Left colon (tissue), 2 donors: ENCODE measurements at regions of chr5 and their contacts with region 1.

Region 1: DNA sequence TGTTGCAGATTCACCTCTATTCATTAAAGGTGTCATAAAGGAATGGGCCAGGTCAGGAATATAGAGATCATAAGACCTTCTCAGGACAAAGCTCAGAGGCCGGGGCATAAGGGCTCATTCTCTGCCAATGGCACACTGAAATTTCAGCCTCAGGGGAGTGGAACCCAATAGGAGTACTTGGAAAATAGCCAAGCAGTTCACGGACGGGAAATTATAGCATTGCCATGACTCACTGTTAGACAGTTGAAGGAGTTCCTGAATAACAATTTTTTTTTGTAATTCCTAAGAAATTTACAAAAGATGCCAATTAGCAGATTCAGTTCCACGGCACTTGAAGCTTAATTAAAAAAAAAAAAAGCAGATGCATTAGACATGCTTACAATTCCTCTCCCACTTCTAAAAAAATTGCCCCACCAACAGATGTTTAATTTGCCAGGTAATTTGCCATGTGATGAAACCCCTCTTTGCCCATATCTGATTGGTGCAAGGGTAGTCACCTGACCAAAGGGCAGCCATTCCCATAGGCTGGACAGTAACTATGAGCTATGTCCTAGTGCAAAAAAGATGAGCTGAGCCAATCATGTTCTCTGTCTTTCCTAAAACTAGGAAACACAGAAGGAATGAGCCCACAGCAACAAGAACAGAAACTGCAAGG is 58.6 kb downstream of the PTCD2 start:
- DNase-seq: no peak
- ATAC-seq: no peak

Region 2: GRCh38 chr5:72494623-72495124 is 115.9 kb after region 1 on chr5:
- intact Hi-C with region 1: no loop called
- DNase-seq: no peak
- ATAC-seq: no peak

Region 3: DNA sequence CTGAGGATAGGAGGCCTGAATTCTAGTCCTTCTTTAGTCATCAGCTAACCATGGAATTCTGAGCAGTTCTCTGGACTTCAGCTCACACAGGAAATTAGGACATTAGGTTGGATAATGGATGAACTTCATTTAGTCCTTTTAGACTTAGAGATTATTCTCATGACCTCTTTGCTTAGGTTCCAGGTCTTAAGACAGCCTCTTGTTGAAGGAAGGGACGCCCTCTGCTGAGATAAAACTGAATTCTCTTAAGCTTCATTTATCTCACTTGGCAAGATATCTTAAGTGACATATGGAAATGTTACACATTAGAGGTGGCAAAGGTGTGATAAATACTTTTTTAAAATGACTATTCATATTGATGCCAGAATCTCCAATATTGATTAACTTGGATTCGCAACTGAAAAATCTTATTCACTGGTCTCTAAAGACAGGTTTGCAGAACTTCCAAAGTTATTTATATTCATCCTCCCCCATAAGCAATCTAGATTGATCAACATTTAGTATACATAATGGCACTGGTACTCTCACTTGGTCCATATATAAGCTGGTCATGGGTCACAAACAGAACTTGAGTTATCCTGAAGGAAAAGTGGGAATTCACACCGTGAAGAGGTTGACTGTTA is 145.3 kb after region 1 on chr5:
- intact Hi-C with region 1: loop called in 1 of 2 experiments (anchors 10 kb)
- DNase-seq: no peak
- ATAC-seq: peak; percentile 88

Region 4: DNA sequence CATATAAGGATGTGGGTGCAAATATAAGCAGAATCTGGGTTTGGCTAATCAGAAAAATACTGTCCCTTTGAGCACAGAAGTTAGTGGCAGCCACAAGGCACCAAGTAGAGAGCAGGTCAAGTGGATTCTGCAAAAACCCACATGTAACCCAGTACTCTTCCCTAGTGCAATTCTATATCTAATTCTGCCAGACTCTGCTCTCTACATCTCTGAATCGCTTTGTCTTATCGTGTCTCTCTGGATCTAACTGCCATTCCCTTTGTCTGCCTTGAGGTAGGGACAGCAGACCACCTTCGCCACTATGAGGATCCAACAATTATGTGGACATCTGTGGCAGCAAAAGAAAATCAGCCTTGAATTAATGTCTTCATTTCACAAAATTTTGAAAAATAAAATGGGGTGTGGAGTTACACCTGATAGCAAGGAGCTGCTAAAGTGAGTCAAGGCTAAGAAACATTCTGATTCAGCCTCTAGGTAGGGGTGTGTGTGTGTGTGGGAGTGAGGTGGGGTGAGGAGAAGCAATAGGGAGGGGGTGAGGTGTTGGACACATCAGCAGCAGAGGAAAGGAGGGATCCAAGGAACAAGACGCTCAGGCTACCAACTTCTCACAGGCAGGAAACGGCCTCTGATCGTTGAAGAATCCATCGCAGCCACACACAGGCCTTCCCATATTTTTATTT is 162.1 kb after region 1 on chr5:
- intact Hi-C with region 1: no loop called
- DNase-seq: no peak
- ATAC-seq: no peak